RWPE1 (cell line): ENCODE measurements at regions of chr1 and their contacts with region 1.

Region 1: GRCh38 chr1:116485071-116485735 is 85.6 kb downstream of the CD58 start:
- DNase-seq: peak; percentile 71
- H3K27ac ChIP-seq: 0 out of 2 replicates have a peak overlapping the region, but pooled peaks have one; percentile 1
- CTCF ChIP-seq: peak; percentile 78

Region 2: GRCh38 chr1:116139592-116140134 is 345.5 kb before region 1 on chr1:
- CTCF ChIA-PET with region 1: interaction called, 91 read pairs
- POLR2A ChIA-PET with region 1: no interaction called
- DNase-seq: no peak
- H3K27ac ChIP-seq: no peak overlapping the region
- CTCF ChIP-seq: no peak

Region 3: DNA sequence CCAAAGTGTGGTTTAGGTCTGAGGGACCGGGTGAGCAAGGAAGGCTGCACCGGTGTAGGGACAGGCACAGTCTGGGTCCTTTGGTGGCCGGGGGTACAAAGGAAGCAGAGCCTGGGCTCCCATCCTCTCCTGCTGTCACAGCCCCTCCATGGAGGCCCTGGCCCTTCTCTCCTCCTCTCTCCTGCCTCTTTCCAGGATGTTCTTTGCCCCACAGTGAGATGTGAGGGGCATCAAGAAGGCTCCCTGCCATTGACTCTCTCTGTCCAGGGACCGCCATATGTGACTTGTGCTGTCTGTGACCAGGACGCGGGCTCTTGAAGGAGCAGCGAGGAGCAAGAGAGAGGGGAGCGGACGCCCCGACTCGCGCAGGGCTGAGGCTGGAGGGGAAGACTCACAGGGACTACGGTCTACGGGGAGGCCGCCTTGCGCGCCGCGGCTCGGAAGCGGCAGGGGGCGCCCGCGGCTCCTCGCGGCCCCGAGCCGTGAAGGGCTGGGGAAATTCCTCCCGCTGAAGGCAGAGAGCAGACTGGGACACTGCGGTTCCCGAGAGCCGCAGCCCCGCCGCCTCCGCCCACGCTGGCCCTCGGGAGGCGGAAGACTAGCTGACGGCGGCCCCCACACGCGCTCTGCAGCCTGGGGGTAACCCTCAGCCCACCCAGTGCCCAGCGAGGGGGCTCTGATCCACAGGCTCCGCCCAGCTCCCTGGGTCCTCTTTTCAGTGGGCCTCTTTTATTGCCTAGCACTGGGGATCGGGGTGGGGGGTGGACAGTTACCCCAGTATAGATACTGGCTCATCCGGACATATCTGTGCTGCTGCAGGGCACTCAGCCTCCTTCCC is 333.2 kb before region 1 on chr1:
- CTCF ChIA-PET with region 1: interaction called, 26 read pairs
- POLR2A ChIA-PET with region 1: no interaction called
- DNase-seq: peak; percentile 83
- H3K27ac ChIP-seq: peak overlapping the region; percentile 48; the same call in 1 of the 2 replicates
- CTCF ChIP-seq: peak; percentile 95

Region 4: DNA sequence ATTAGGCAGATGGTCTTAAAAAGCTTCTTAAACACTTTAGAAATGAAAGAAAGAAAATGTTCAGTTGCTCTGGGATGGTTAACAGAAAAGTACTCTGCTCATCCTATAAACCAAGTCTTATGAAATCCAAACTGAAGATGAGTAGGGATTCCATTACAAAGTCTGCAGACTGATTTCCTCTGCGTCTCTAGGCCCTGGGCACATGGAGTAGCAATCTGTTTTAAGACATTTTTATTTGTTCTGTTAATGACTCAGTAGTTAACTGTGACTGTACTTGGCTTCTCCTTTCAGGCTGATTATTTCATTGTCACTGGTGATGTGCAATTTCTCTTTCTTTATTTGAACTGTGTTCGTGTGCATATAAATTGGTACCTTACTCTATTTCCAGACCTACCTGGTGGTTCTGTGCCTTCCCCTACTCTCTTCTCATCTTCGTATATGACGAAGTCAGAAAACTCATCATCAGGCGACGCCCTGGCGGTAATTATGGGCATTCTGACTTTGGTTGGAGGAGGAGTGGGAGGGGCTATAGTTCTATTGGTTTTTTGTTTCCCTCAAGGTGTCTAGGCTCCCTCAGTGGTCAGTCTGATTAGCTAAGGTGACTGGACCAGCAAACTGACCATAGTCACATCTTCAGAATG is 81.6 kb before region 1 on chr1:
- CTCF ChIA-PET with region 1: interaction called, 13 read pairs
- POLR2A ChIA-PET with region 1: no interaction called
- DNase-seq: no peak
- H3K27ac ChIP-seq: peak overlapping the region; percentile 44
- CTCF ChIP-seq: no peak

Region 5: GRCh38 chr1:116418091-116418830 is 66.9 kb before region 1 on chr1:
- CTCF ChIA-PET with region 1: interaction called, 15 read pairs
- POLR2A ChIA-PET with region 1: interaction called, 3 read pairs
- DNase-seq: peak; percentile 57
- H3K27ac ChIP-seq: peak overlapping the region; percentile 65
- CTCF ChIP-seq: no peak

Region 6: GRCh38 chr1:116498789-116499628 is 13.8 kb after region 1 on chr1:
- CTCF ChIA-PET with region 1: interaction called, 39 read pairs
- POLR2A ChIA-PET with region 1: no interaction called
- DNase-seq: peak; percentile 70
- H3K27ac ChIP-seq: peak overlapping the region; percentile 35; the same call in 1 of the 2 replicates
- CTCF ChIP-seq: peak; percentile 83